CD8-positive, alpha-beta T cell (primary cell): ENCODE measurements at regions of chr12 and their contacts with region 1.

Region 1: GRCh38 chr12:51307655-51308593 is 16.1 kb downstream of the BIN2 start:
- DNase-seq: peak in 2 of 9 experiments; percentile 21 to 49
- ATAC-seq: peak; percentile 73
- H3K4me3 ChIP-seq: no peak overlapping the region
- H3K4me3 Mint-ChIP-seq: no peak overlapping the region
- H3K27ac ChIP-seq: peak overlapping the region; percentile 34 to 56
- H3K27ac Mint-ChIP-seq: peak overlapping the region; percentile 80
- H3K4me1 ChIP-seq: peaks cover 54% of the 10 kb centered on the region
- H3K4me1 Mint-ChIP-seq: peaks cover 74% of the 10 kb centered on the region
- H3K27me3 ChIP-seq: no peaks in the 10 kb centered on the region
- H3K27me3 Mint-ChIP-seq: no peaks in the 10 kb centered on the region
- CTCF ChIP-seq: no peak

Region 2: GRCh38 chr12:51270067-51270970 is 37.6 kb before region 1 on chr12 and contains the start of gene SMAGP:
- CTCF ChIA-PET with region 1: interaction called, 3 read pairs
- POLR2A ChIA-PET with region 1: no interaction called
- intact Hi-C with region 1: loop called in 1 of 2 experiments (anchors 5 kb)
- DNase-seq: peak in 8 of 9 experiments; percentile 28 to 76 (median 52)
- ATAC-seq: peak; percentile 50
- H3K4me3 ChIP-seq: peak within 1 kb of the TSS; percentile 54 to 71
- H3K4me3 Mint-ChIP-seq: peak within 1 kb of the TSS; percentile 90
- H3K27ac ChIP-seq: peak within 1 kb of the TSS; percentile 42 to 58
- H3K27ac Mint-ChIP-seq: peak within 1 kb of the TSS; percentile 84
- H3K4me1 ChIP-seq: peaks cover 16% of the 10 kb centered on the region
- H3K4me1 Mint-ChIP-seq: peaks cover 23% of the 10 kb centered on the region
- H3K27me3 ChIP-seq: no peaks in the 10 kb centered on the region
- H3K27me3 Mint-ChIP-seq: no peaks in the 10 kb centered on the region
- CTCF ChIP-seq: no peak
- total RNA-seq, gene SMAGP: 1.9 to 2.3 TPM

Region 3: GRCh38 chr12:51388069-51388799 is 80.3 kb after region 1 on chr12:
- CTCF ChIA-PET with region 1: no interaction called
- POLR2A ChIA-PET with region 1: no interaction called
- intact Hi-C with region 1: no loop called
- DNase-seq: no peak
- ATAC-seq: no peak
- H3K4me3 ChIP-seq: no peak overlapping the region
- H3K4me3 Mint-ChIP-seq: no peak overlapping the region
- H3K27ac ChIP-seq: no peak overlapping the region
- H3K27ac Mint-ChIP-seq: peak overlapping the region; percentile 7
- H3K4me1 ChIP-seq: peaks cover 47% of the 10 kb centered on the region
- H3K4me1 Mint-ChIP-seq: peaks cover 61% of the 10 kb centered on the region
- H3K27me3 ChIP-seq: no peaks in the 10 kb centered on the region
- H3K27me3 Mint-ChIP-seq: no peaks in the 10 kb centered on the region
- CTCF ChIP-seq: no peak

Region 4: GRCh38 chr12:51403681-51404136 is 95.8 kb after region 1 on chr12:
- CTCF ChIA-PET with region 1: no interaction called
- POLR2A ChIA-PET with region 1: no interaction called
- intact Hi-C with region 1: no loop called
- DNase-seq: no peak
- ATAC-seq: no peak
- H3K4me3 ChIP-seq: no peak overlapping the region
- H3K4me3 Mint-ChIP-seq: no peak overlapping the region
- H3K27ac ChIP-seq: no peak overlapping the region
- H3K27ac Mint-ChIP-seq: no peak overlapping the region
- H3K4me1 ChIP-seq: no peaks in the 10 kb centered on the region
- H3K4me1 Mint-ChIP-seq: peaks cover 7% of the 10 kb centered on the region
- H3K27me3 ChIP-seq: no peaks in the 10 kb centered on the region
- H3K27me3 Mint-ChIP-seq: no peaks in the 10 kb centered on the region
- CTCF ChIP-seq: no peak